Astrocyte of the cerebellum (primary cell): ENCODE measurements at regions of chr2 and their contacts with region 1.

Region 1: DNA sequence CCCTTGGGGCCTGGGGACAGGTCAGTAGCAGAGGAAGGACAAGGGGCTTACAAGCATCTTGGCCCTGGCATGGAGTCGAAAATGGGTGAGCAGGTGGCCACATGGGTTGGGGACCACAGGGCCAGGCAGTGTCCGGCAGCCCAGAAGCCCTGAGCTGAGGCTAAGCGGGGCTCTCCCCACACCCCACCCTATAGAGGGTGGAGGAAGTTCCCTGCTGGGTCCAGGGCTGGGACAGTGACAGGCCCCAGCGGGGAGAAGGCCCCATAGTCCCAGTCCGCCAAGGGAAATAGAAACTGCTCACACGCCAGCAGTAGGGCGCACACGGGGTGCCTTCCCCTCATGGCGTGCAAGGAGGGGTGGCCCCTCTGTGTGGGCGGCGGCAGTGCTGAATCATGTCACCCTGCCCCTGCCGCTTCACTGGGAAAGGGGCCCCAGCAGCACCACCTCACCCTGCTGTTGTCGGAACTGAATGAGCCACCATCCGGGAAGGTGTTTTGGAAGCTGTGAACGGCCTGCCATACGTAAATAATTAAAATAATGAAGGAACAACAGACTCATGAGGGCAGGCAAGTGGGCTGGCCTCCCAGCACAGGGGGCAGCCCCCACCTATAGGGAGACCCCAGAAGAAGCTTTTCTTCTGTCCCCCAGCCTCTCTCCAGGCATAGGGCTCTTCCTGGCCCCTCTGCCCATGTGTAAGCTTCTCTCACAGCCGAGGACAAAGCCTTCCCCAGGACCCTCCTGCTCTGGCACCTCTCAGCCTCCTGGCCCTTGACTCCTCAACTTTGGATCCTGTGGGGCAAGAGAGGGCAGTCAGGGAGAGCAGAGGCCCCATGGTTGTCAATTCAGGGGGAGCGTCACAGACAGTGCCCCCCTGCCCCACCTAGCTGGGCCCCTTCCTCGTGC is 12.7 kb upstream of the DUSP2 start:
- DNase-seq: no peak
- H3K4me3 ChIP-seq: no peak overlapping the region
- CTCF ChIP-seq: no peak

Region 2: GRCh38 chr2:96204836-96205624 is 47.1 kb after region 1 on chr2:
- in situ Hi-C with region 1: loop called (anchors 5 kb)
- DNase-seq: no peak
- H3K4me3 ChIP-seq: no peak overlapping the region
- CTCF ChIP-seq: no peak

Region 3: GRCh38 chr2:96225016-96225533 is 67.2 kb after region 1 on chr2:
- in situ Hi-C with region 1: no loop called
- DNase-seq: no peak
- H3K4me3 ChIP-seq: no peak overlapping the region
- CTCF ChIP-seq: no peak